Breast epithelium (tissue), 4 donors: ENCODE measurements at regions of chr7 and their contacts with region 1.

Region 1: GRCh38 chr7:138002096-138002827 is 376 bp upstream of the CREB3L2 start:
- DNase-seq: peak; percentile 99 to 100
- H3K4me3 ChIP-seq: peak overlapping the region; percentile 80 to 97 (median 91)
- H3K27ac ChIP-seq: peak overlapping the region; percentile 96
- H3K4me1 ChIP-seq: peaks cover 0 to 3% of the 10 kb centered on the region in 2 donors
- H3K27me3 ChIP-seq: no peaks in the 10 kb centered on the region
- CTCF ChIP-seq: peak; percentile 88 to 94 (median 93)
- POLR2A ChIP-seq: no peak

Region 2: DNA sequence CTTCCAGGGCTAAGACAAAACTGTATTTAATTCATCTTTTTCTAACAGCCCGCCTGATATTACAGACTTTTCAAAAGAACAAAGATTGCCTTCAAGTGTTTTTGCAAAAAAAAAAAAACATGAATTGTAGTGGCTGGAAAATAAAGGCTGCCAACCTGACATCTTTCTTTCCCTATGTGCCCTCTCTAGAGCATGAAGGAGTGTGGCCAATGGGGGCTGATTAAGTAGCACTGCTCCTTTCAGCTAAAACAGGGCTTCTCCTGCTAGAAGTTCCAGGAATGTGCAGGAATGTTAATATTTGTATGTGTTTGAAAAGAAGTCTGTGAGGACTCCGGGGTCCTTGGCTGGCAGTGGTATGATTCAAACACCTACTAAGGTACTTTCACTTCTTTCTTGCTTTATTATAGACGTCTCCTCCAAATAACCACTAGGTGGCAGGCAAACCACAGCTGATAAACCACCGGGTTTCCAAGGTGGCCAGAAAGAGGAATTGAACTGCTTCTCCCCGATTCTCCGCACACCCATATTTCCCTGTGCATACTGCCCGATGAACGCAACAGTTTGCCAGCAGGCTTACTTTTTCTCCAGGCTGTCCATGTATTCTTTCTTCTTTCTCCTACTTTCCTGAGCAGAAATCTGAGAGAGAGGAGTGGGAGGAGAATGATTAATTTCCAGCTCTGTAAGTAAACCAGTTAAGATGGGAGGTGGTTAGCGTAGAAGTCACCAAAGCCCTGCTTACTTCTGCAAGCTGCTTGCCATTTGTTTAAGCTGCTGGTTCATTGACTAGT is 98.7 kb before region 1 on chr7:
- intact Hi-C with region 1: loop called (anchors 2 kb)
- DNase-seq: peak in 1 of 2 donors; percentile 55
- H3K4me3 ChIP-seq: no peak overlapping the region
- H3K27ac ChIP-seq: peak overlapping the region in 1 of 2 donors; percentile 35
- H3K4me1 ChIP-seq: no peaks in the 10 kb centered on the region
- H3K27me3 ChIP-seq: no peaks in the 10 kb centered on the region
- CTCF ChIP-seq: peak; percentile 82 to 90 (median 90)
- POLR2A ChIP-seq: no peak

Region 3: GRCh38 chr7:137953665-137954470 is 48.4 kb before region 1 on chr7:
- intact Hi-C with region 1: loop called (anchors 1 kb)
- DNase-seq: no peak
- H3K4me3 ChIP-seq: no peak overlapping the region
- H3K27ac ChIP-seq: peak overlapping the region; percentile 53 to 54
- H3K4me1 ChIP-seq: peaks cover 0 to 5% of the 10 kb centered on the region in 2 donors
- H3K27me3 ChIP-seq: no peaks in the 10 kb centered on the region
- CTCF ChIP-seq: no peak
- POLR2A ChIP-seq: no peak

Region 4: GRCh38 chr7:139340037-139340807 is 1338.0 kb after region 1 on chr7:
- intact Hi-C with region 1: loop called (anchors 5 kb)
- DNase-seq: peak; percentile 98 to 100
- H3K4me3 ChIP-seq: peak overlapping the region; percentile 92 to 97 (median 93)
- H3K27ac ChIP-seq: peak overlapping the region; percentile 100
- H3K4me1 ChIP-seq: peaks cover 3 to 7% of the 10 kb centered on the region in 2 donors
- H3K27me3 ChIP-seq: no peaks in the 10 kb centered on the region
- CTCF ChIP-seq: peak; percentile 30 to 75 (median 73)
- POLR2A ChIP-seq: peak; percentile 41